Prostate gland (tissue), 2 donors: ENCODE measurements at regions of chr4 and their contacts with region 1.

Region 1: DNA sequence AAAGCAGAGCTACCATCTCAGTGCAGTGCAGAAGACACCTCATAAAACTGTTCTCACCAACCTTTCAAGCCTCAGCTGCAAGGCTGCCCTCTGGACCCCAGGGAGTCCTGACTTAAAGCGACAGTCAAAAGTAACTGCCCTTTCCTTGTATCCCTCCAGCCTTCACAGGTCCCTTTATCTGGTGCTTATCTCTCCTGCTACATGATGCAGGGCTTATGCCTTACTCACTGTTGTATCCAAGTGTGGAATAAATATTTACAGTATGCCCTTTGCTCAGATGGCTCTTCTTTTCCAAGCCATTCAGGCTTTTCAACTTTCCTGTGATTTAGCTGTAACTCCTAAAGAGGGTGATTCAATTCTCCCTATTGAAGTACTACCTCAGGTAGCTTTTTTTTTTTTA is 92.6 kb downstream of the KDR start:
- DNase-seq: no peak
- H3K4me3 ChIP-seq: no peak overlapping the region
- H3K27ac ChIP-seq: peak overlapping the region; percentile 21 to 50
- H3K4me1 ChIP-seq: peaks cover 5% of the 10 kb centered on the region
- H3K27me3 ChIP-seq: no peaks in the 10 kb centered on the region
- CTCF ChIP-seq: no peak
- POLR2A ChIP-seq: no peak

Region 2: DNA sequence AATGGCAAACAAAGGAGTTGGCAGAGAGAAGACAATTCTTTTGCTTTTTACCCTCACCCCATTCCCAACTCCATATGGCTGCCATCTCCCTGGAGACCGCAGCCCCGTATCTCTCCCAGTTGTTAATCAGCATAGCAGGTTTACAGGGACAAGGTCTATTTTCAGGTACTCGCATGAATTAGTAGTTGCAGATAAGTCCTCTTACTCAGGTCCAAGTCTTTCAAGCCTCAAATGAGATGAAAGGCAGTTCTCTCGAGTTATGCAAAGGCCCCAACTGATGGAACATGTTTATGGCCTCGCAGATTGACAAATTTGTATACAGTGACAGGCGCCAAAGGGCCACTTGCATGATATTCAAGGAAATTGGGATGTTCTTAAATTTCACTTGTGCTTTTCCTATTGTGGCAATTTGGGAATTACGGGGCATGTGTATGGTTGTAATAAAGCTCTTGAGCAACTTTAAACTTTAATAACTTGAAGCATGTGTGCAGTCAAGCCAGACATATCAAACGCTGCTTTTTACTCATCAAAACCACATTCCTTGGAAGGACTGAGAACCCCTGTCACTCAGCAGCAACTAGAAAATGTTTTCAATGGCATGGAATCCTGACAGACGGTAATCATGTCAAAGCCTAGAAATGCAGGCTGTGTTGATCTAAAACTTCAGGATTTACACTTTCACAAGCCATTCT is 47.5 kb after region 1 on chr4:
- intact Hi-C with region 1: loop called (anchors 2 kb)
- DNase-seq: no peak
- H3K4me3 ChIP-seq: no peak overlapping the region
- H3K27ac ChIP-seq: peak overlapping the region; percentile 10 to 14
- H3K4me1 ChIP-seq: no peaks in the 10 kb centered on the region
- H3K27me3 ChIP-seq: no peaks in the 10 kb centered on the region
- CTCF ChIP-seq: no peak
- POLR2A ChIP-seq: no peak